Left ventricle myocardium inferior (tissue), 1 donor: ENCODE measurements at regions of chr7 and their contacts with region 1.

Region 1: GRCh38 chr7:122528879-122529481 is 169.9 kb downstream of the RNF133 start:
- DNase-seq: no peak
- H3K4me3 ChIP-seq: no peak overlapping the region
- H3K27ac ChIP-seq: no peak overlapping the region
- H3K4me1 ChIP-seq: no peaks in the 10 kb centered on the region
- H3K27me3 ChIP-seq: no peaks in the 10 kb centered on the region
- CTCF ChIP-seq: peak; percentile 69

Region 2: GRCh38 chr7:122219253-122219865 is 309.6 kb before region 1 on chr7:
- intact Hi-C with region 1: loop called (anchors 10 kb)
- DNase-seq: no peak
- H3K4me3 ChIP-seq: no peak overlapping the region
- H3K27ac ChIP-seq: no peak overlapping the region
- H3K4me1 ChIP-seq: no peaks in the 10 kb centered on the region
- H3K27me3 ChIP-seq: no peaks in the 10 kb centered on the region
- CTCF ChIP-seq: peak; percentile 72

Region 3: DNA sequence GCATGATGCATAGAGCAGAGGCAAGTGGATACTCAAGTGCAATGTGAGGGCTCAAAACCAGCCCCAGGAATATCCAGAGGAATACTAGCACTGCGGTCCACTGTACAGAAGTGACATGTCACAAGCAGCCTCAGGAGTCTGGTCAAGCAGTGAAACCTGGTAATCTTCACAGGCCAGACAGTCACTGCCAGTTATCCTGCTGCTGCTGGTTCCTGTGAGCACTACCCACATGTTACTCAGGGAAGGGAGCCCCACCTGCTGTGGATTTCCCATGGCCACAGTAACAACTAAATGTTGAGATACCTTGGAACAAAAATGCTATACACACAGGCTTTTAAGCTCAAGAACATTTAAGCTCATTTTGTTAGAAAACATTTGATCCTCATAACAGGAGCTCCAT is 66.9 kb after region 1 on chr7:
- intact Hi-C with region 1: no loop called
- DNase-seq: no peak
- H3K4me3 ChIP-seq: no peak overlapping the region
- H3K27ac ChIP-seq: no peak overlapping the region
- H3K4me1 ChIP-seq: no peaks in the 10 kb centered on the region
- H3K27me3 ChIP-seq: no peaks in the 10 kb centered on the region
- CTCF ChIP-seq: no peak